Left ventricle myocardium superior (tissue), 1 donor: ENCODE measurements at regions of chr5 and their contacts with region 1.

Region 1: GRCh38 chr5:123511648-123512605 is at the start of gene CSNK1G3:
- DNase-seq: peak; percentile 96
- ATAC-seq: peak; percentile 99
- total RNA-seq, gene CSNK1G3: 21.2 TPM

Region 2: DNA sequence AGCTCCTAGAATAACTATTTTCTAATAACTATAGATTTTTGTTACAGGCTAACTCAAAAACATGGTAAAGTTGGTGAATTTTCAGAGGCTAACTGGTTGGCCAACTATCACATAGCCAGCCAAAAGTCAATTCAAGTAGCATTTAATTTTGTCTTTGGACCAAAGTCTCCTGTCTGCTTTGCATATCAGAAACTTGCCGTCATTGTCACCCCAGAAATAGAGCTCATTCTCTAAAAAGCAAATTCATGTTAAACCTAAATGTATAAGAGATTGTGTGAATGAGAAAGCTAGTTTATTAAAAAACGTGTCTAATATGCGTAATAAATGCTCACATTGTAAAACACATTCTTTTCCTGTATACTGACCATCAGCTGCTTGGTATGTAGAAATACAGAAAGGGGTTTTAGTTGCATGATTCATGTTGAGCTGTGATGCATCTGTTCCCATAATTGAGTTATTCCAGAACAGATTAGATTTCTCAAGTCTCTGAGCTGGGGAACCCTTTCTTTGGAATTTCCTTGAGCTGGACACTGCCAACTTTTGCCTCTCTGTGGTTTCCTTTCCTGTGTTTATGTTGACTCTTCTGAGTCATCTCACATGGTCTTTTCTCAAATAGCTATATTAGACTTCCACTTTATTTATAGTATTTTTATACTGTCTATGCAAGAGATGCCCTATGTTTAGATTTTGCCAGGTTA is 1542.9 kb before region 1 on chr5:
- intact Hi-C with region 1: loop called (anchors 5 kb)
- DNase-seq: no peak
- ATAC-seq: peak; percentile 69

Region 3: GRCh38 chr5:122835681-122836080 is 676.2 kb before region 1 on chr5:
- intact Hi-C with region 1: no loop called
- DNase-seq: no peak
- ATAC-seq: no peak